ENCODE measurements at regions of chr1 and their contacts with region 1.

Region 1: GRCh38 chr1:173190101-173190906 is 16.8 kb downstream of the TNFSF4 start:
- DNase-seq: peak; percentile 93
- H3K4me3 ChIP-seq: no peak overlapping the region
- H3K27ac ChIP-seq: peak overlapping the region; percentile 68
- H3K4me1 ChIP-seq: peaks cover 17% of the 10 kb centered on the region
- H3K27me3 ChIP-seq: no peaks in the 10 kb centered on the region
- CTCF ChIP-seq: no peak

Region 2: GRCh38 chr1:172832006-172832731 is 358.1 kb before region 1 on chr1:
- CTCF ChIA-PET with region 1: no interaction called
- dilution Hi-C with region 1: no loop called
- in situ Hi-C with region 1: loop called (anchors 5 kb)
- intact Hi-C with region 1: no loop called
- DNase-seq: no peak
- H3K4me3 ChIP-seq: no peak overlapping the region
- H3K27ac ChIP-seq: no peak overlapping the region
- H3K4me1 ChIP-seq: peaks cover 4% of the 10 kb centered on the region
- H3K27me3 ChIP-seq: no peaks in the 10 kb centered on the region
- CTCF ChIP-seq: no peak

Region 3: GRCh38 chr1:173062156-173062938 is 128.0 kb before region 1 on chr1:
- CTCF ChIA-PET with region 1: no interaction called
- dilution Hi-C with region 1: no loop called
- in situ Hi-C with region 1: no loop called
- intact Hi-C with region 1: no loop called
- DNase-seq: peak; percentile 93
- H3K4me3 ChIP-seq: no peak overlapping the region
- H3K27ac ChIP-seq: no peak overlapping the region
- H3K4me1 ChIP-seq: peaks cover 23% of the 10 kb centered on the region
- H3K27me3 ChIP-seq: no peaks in the 10 kb centered on the region
- CTCF ChIP-seq: no peak

Region 4: GRCh38 chr1:173122958-173123852 is 67.1 kb before region 1 on chr1:
- CTCF ChIA-PET with region 1: no interaction called
- dilution Hi-C with region 1: no loop called
- in situ Hi-C with region 1: no loop called
- intact Hi-C with region 1: loop called (anchors 5 kb)
- DNase-seq: peak; percentile 91
- H3K4me3 ChIP-seq: peak overlapping the region; percentile 24 to 45 (median 25)
- H3K27ac ChIP-seq: peak overlapping the region; percentile 88
- H3K4me1 ChIP-seq: peaks cover 13% of the 10 kb centered on the region
- H3K27me3 ChIP-seq: no peaks in the 10 kb centered on the region
- CTCF ChIP-seq: no peak

Measured in mammary epithelial cell (primary cell).